ENCODE measurements at regions of chr4 and their contacts with region 1.

Region 1: GRCh38 chr4:1266881-1267763 is 18.2 kb upstream of the CTBP1 start:
- DNase-seq: no peak
- H3K4me3 ChIP-seq: no peak overlapping the region
- H3K27ac ChIP-seq: no peak overlapping the region
- H3K4me1 ChIP-seq: no peaks in the 10 kb centered on the region
- H3K27me3 ChIP-seq: no peaks in the 10 kb centered on the region
- CTCF ChIP-seq: no peak

Region 2: DNA sequence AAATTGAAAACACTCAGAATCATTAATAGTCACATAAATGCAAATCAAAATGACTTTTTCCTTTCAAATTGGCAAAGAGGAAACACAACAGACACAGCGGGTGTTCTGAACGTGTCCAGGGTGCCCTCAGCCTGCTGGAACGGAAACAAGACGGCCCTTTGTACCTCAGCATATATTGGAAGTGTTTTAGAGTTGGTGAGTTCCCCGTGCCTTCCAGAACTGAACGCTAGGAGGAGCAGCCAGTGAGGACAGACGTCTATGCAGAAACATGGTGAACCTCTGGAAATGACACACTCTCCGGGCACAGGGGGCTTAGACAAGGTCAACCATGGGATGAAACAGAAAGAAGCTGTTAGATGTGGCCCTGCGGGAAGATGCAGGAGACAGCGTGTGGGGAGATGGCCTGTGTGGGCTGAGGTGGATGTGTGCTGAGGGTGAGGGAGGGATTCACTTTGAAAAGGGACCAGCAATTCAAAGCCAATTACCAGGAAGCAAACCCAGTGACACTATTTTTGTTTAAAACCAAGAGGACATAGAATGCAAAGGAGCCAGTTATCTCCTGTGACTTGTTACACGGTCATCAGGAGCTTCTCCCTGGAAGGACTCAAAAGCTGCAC is 194.2 kb before region 1 on chr4:
- CTCF ChIA-PET with region 1: no interaction called
- dilution Hi-C with region 1: no loop called
- in situ Hi-C with region 1: no loop called
- intact Hi-C with region 1: loop called (anchors 1 kb)
- DNase-seq: peak; percentile 55
- H3K4me3 ChIP-seq: no peak overlapping the region
- H3K27ac ChIP-seq: no peak overlapping the region
- H3K4me1 ChIP-seq: no peaks in the 10 kb centered on the region
- H3K27me3 ChIP-seq: no peaks in the 10 kb centered on the region
- CTCF ChIP-seq: peak; percentile 76 to 87

Region 3: GRCh38 chr4:1819284-1819683 is 552.2 kb after region 1 on chr4:
- CTCF ChIA-PET with region 1: no interaction called
- dilution Hi-C with region 1: no loop called
- in situ Hi-C with region 1: no loop called
- intact Hi-C with region 1: no loop called
- DNase-seq: no peak
- H3K4me3 ChIP-seq: no peak overlapping the region
- H3K27ac ChIP-seq: no peak overlapping the region
- H3K4me1 ChIP-seq: no peaks in the 10 kb centered on the region
- H3K27me3 ChIP-seq: no peaks in the 10 kb centered on the region
- CTCF ChIP-seq: no peak

Measured in mammary epithelial cell (primary cell).